ENCODE measurements at regions of chr16 and their contacts with region 1.

Region 1: GRCh38 chr16:2155091-2156021 is at the start of gene TRAF7:
- DNase-seq: peak; percentile 99 to 100
- H3K4me3 ChIP-seq: peak within 1 kb of the TSS; percentile 80 to 89
- H3K27ac ChIP-seq: peak within 1 kb of the TSS; percentile 74 to 81
- H3K4me1 ChIP-seq: peaks cover 25 to 61% of the 10 kb centered on the region in 2 donors
- H3K27me3 ChIP-seq: no peaks in the 10 kb centered on the region
- CTCF ChIP-seq: peak in 1 of 3 experiments; percentile 10
- total RNA-seq, gene TRAF7: 39.6 TPM

Region 2: GRCh38 chr16:1782352-1783091 is 372.8 kb before region 1 on chr16 and contains the starts of genes NUBP2 and SPSB3:
- intact Hi-C with region 1: loop called (anchors 1 kb)
- DNase-seq: peak; percentile 99 to 100
- H3K4me3 ChIP-seq: peak within 1 kb of the TSS; percentile 84 to 99
- H3K27ac ChIP-seq: peak within 1 kb of the TSS; percentile 77 to 83
- H3K4me1 ChIP-seq: peaks cover 11 to 26% of the 10 kb centered on the region in 2 donors
- H3K27me3 ChIP-seq: no peaks in the 10 kb centered on the region
- CTCF ChIP-seq: no peak
- total RNA-seq, gene NUBP2: 182 TPM
- total RNA-seq, gene SPSB3: 159 TPM

Region 3: GRCh38 chr16:1863681-1864460 is 291.5 kb before region 1 on chr16:
- intact Hi-C with region 1: loop called (anchors 10 kb)
- DNase-seq: no peak
- H3K4me3 ChIP-seq: no peak overlapping the region
- H3K27ac ChIP-seq: no peak overlapping the region
- H3K4me1 ChIP-seq: no peaks in the 10 kb centered on the region
- H3K27me3 ChIP-seq: no peaks in the 10 kb centered on the region
- CTCF ChIP-seq: peak; percentile 31 to 54 (median 39)

Region 4: DNA sequence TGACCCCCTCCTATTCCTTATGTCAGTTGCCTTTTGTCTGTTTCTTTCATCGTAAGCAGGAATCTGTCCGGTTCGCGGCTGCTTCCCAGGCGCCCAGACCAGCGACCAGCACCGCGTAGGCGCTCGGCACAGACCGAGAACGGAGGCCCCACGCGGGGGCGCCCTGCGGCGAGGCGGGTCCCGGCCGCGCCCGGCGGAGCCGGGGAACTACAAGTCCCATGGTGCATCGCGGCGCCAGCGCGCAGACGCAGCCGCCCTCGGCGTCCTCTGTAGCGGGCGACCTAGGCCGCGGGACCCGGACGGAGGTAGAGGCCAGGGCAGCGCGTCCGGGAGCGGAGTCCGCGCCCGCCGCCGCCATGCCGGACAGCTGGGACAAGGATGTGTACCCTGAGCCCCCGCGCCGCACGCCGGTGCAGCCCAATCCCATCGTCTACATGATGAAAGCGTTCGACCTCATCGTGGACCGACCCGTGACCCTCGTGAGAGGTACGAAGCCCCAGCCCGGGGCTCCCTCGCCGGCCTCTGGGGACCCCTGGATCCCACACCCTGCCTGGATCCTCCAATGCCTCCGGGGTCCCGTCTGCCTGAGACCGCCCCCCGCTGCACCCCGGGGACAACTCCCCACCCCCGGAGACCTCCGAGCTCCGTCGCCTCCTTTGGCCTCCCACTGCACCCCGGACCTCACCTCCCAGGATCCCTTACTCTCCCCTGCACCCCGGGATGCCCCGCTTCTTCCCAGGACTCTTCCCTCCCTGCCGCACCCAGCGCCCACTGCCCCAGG is 195.9 kb before region 1 on chr16 and contains the start of gene NDUFB10:
- intact Hi-C with region 1: loop called (anchors 1 kb)
- DNase-seq: peak; percentile 52 to 94
- H3K4me3 ChIP-seq: peak within 1 kb of the TSS; percentile 86 to 90
- H3K27ac ChIP-seq: peak within 1 kb of the TSS; percentile 74 to 80
- H3K4me1 ChIP-seq: peaks cover 3 to 20% of the 10 kb centered on the region in 2 donors
- H3K27me3 ChIP-seq: no peaks in the 10 kb centered on the region
- CTCF ChIP-seq: peak; percentile 50 to 78 (median 57)
- total RNA-seq, gene NDUFB10: 68.2 TPM

Region 5: GRCh38 chr16:2121853-2122252 is 33.5 kb before region 1 on chr16:
- intact Hi-C with region 1: loop called (anchors 1 kb)
- DNase-seq: peak in 1 of 2 donors; percentile 78
- H3K4me3 ChIP-seq: peak overlapping the region; percentile 47 to 62
- H3K27ac ChIP-seq: peak overlapping the region; percentile 94 to 99
- H3K4me1 ChIP-seq: peaks cover 23 to 44% of the 10 kb centered on the region in 2 donors
- H3K27me3 ChIP-seq: no peaks in the 10 kb centered on the region
- CTCF ChIP-seq: no peak

Region 6: GRCh38 chr16:2205104-2205966 is 50.0 kb after region 1 on chr16 and contains the start of gene MLST8:
- intact Hi-C with region 1: loop called (anchors 1 kb)
- DNase-seq: peak; percentile 25 to 90
- H3K4me3 ChIP-seq: peak within 1 kb of the TSS; percentile 80 to 97
- H3K27ac ChIP-seq: peak within 1 kb of the TSS; percentile 96 to 98
- H3K4me1 ChIP-seq: peaks cover 4 to 11% of the 10 kb centered on the region in 2 donors
- H3K27me3 ChIP-seq: no peaks in the 10 kb centered on the region
- CTCF ChIP-seq: peak in 2 of 3 experiments; percentile 6 to 10
- total RNA-seq, gene MLST8: 23.7 TPM

Region 7: DNA sequence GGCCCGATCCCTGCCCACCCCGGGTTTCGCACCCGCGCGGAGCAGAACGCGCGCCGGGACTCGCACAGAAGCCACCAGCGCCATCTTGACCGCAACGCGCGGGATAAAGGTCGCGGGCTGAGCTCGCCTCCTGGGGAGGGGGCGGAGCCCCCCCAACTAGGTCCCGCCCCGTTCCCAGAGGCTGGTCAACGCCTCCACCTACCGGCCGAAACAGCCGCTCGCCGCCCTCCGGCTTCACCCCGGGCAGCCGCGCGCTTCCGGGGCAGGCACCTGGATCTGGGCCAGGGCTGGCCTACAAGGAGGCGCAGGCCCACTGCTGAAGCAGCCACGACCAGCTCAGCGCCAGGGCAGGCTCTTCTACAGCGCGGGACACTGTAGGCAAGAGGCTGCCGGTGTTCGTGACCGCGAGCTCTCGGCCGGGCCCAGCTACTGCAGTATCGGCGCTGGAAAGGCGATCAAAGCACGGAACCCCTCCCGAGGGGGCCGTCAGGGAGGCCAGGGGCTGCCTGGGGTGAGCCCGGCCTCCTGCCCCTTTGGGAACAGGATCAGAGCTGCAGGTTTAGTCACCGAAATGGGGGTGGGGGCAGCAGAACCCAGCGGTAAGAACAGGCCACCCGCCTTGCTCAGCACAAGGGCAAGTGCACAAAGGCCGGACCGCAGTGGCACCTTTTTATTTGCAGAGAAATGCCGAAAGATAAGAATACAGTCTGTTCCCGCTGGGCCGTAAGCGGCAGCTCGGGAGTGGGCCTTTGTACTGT is 96.3 kb after region 1 on chr16 and contains the start of gene ECI1:
- intact Hi-C with region 1: loop called (anchors 1 kb)
- DNase-seq: peak; percentile 74 to 98
- H3K4me3 ChIP-seq: peak within 1 kb of the TSS; percentile 80 to 86
- H3K27ac ChIP-seq: peak within 1 kb of the TSS; percentile 82 to 88
- H3K4me1 ChIP-seq: peaks cover 10 to 11% of the 10 kb centered on the region in 2 donors
- H3K27me3 ChIP-seq: no peaks in the 10 kb centered on the region
- CTCF ChIP-seq: peak; percentile 73 to 76 (median 74)
- total RNA-seq, gene ECI1: 10.9 TPM